SK-N-SH (cell line): ENCODE measurements at regions of chr5 and their contacts with region 1.

Region 1: GRCh38 chr5:10233505-10233904 is 16.2 kb downstream of the ATPSCKMT start:
- DNase-seq: peak; percentile 74
- H3K4me3 ChIP-seq: no peak overlapping the region
- H3K27ac ChIP-seq: peak overlapping the region in 1 of 2 experiments; percentile 63; a peak in 2 of 4 replicates
- H3K4me1 ChIP-seq: peaks cover 0 to 25% of the 10 kb centered on the region in 2 experiments; a peak in 3 of 4 replicates
- H3K27me3 ChIP-seq: no peaks in the 10 kb centered on the region
- CTCF ChIP-seq: peak; percentile 73
- EP300 ChIP-seq: 0 out of 4 replicates have a peak, but pooled peaks of 1 of the 2 experiments have one; percentile 12
- RAD21 ChIP-seq: peak; percentile 80

Region 2: DNA sequence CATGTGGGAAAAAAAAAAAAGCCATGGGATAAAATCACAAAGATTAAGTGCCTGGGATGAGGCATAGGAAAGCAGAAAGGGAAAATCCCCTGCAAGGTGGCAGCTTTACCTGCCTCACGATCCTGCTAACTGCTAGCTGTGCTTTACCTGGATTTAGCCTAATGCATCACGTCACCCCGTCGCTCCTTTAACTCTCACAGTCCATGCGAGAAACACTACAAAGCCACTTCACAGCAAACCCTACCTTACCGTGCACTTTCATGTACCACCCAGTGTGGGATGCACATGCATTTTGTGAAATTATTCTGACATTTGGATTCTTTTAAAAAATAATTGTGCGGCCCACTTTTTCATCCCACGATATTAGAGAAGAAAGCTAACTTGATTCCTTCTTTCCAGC is 14.8 kb before region 1 on chr5:
- CTCF ChIA-PET with region 1: interaction called, 12 read pairs
- POLR2A ChIA-PET with region 1: no interaction called
- DNase-seq: no peak
- H3K4me3 ChIP-seq: no peak overlapping the region
- H3K27ac ChIP-seq: no peak overlapping the region
- H3K4me1 ChIP-seq: no peaks in the 10 kb centered on the region
- H3K27me3 ChIP-seq: no peaks in the 10 kb centered on the region
- CTCF ChIP-seq: no peak
- EP300 ChIP-seq: no peak
- RAD21 ChIP-seq: no peak

Region 3: DNA sequence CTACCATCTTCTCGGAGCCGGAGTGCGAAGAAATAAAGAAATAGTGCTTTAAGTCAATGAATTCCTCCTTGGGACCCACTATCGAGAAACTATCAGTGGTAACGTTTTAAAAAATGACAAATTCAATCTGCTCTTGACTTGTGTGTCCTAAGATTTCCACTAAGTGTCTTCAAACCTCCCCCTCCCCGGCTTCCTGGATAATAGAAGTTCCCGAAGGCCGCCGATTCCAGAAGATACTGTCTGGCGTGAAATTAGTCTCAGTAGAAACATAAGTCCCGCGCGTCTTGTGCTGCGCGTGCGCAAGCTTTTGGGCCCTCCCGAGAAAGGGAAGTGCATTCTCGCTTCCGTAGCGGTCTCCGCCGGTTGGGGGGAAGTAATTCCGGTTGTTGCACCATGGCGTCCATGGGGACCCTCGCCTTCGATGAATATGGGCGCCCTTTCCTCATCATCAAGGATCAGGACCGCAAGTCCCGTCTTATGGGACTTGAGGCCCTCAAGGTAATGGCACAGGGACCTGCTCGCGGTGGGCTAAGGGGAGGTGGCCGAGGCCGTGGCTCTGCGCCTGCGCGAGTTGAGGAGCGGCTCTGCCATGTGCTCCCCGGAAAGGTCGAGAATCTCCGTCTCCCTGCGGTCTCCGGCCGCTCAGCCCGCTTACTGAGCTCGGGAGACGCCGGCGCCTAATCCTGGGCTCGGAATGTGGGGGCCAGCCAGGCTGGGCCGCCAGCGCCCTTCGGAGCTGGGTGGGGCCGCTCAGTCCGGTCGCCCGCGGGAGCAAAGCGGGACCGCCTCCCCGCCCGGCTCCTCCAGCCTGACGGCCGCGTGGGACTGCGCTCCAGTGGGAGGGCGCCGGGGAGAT is 16.7 kb after region 1 on chr5 and contains the start of gene CCT5:
- CTCF ChIA-PET with region 1: interaction called, 10 read pairs
- POLR2A ChIA-PET with region 1: no interaction called
- DNase-seq: peak; percentile 94
- H3K4me3 ChIP-seq: peak within 1 kb of the TSS; percentile 93 to 98
- H3K27ac ChIP-seq: peak within 1 kb of the TSS; percentile 94 to 98
- H3K4me1 ChIP-seq: peaks cover 7 to 20% of the 10 kb centered on the region in 2 experiments; a peak in 3 of 4 replicates
- H3K27me3 ChIP-seq: no peaks in the 10 kb centered on the region
- CTCF ChIP-seq: no peak
- EP300 ChIP-seq: no peak
- RAD21 ChIP-seq: no peak
- polyA plus RNA-seq, gene CCT5: 378 and 472 TPM in 2 replicates

Region 4: GRCh38 chr5:10797261-10797660 is 563.8 kb after region 1 on chr5:
- CTCF ChIA-PET with region 1: no interaction called
- POLR2A ChIA-PET with region 1: no interaction called
- DNase-seq: no peak
- H3K4me3 ChIP-seq: no peak overlapping the region
- H3K27ac ChIP-seq: no peak overlapping the region
- H3K4me1 ChIP-seq: no peaks in the 10 kb centered on the region
- H3K27me3 ChIP-seq: peaks cover 10% of the 10 kb centered on the region; the same call in 1 of the 2 replicates
- CTCF ChIP-seq: no peak
- EP300 ChIP-seq: no peak
- RAD21 ChIP-seq: no peak